Endothelial cell of umbilical vein (primary cell): ENCODE measurements at regions of chr19 and their contacts with region 1.

Region 1: DNA sequence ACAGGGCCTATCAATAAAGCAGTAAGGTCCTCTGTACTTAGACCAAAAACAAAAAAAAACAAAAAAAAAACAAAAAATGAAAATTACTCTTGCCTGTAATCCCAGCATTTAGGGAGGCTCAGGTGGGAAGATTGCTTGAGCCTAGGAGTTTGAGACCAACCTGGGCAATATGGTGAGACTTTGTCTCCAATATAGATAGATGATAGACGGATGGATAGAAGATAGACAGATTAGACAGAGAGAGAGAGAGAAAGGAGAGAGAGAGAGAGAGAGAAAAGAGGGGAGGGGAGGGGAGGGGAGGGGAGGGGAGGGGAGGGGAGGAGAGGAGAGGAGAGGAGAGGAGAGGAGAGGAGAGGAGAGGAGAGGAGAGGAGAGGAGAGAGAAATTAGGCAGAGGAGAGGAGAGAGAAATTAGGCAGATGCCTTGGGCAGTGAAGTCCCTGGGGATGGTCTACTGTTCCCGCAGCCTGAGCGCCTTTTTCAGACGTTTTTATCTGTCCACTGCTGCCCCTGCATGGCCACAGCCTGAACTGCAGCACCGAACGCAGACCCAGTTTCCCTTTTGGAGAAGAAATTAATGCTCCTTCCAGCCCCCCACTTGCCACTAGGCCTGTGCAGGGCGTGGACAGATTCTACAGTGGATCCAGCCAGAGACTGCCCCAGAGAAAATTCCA is 9.8 kb upstream of the ZNF627 start:
- DNase-seq: peak; percentile 65
- H3K4me3 ChIP-seq: no peak overlapping the region
- H3K27ac ChIP-seq: no peak overlapping the region
- H3K4me1 ChIP-seq: no peaks in the 10 kb centered on the region
- H3K27me3 ChIP-seq: no peaks in the 10 kb centered on the region
- CTCF ChIP-seq: peak; percentile 87 to 91
- POLR2A ChIP-seq: no peak

Region 2: DNA sequence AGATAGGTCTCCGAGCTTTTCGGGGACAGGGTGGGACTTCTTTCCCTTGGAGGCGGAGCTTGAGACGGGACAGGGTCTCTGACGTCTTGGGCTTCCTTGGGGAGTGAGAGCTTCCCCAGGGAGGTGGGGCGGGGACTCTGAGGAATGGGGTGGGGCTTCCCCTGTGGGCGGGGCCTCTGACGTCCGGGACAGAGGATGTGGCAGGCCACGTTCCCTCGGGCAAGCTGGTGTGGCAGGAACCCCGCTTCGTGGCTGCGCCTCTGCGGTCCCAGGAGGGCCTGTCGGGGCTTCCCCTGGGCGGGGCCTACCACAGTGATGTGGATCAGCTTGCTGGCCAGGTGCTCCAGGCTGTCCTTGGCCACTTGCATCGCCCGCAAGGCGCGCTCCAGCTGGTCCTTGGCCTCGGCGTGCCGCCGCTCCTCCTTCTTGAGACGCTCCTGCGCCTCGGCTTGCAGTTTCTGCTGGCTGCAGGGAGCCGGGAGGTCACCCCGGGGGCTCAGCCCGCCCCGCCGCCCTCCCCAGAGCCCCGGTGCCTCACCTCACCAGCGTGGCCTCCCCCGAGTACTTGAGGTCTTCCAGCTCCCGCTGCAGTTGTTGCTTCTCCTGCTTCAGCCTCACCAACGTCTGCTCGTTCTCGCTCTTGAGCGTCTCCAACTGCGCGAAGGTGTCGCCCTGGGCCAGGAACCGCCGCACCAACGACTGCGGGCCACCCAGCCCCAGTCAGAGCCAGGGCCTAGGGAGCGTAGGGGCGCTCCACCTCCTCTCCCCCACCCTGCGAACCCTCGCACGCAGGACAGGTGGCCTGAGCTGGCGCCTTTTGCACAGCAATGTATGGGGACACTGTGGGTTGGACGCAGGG is 165.0 kb before region 1 on chr19:
- CTCF ChIA-PET with region 1: no interaction called
- POLR2A ChIA-PET with region 1: no interaction called
- dilution Hi-C with region 1: no loop called
- intact Hi-C with region 1: no loop called
- DNase-seq: peak; percentile 25
- H3K4me3 ChIP-seq: no peak overlapping the region
- H3K27ac ChIP-seq: no peak overlapping the region
- H3K4me1 ChIP-seq: peaks cover 9% of the 10 kb centered on the region
- H3K27me3 ChIP-seq: peaks cover 36 to 39% of the 10 kb centered on the region in 2 experiments
- CTCF ChIP-seq: no peak
- POLR2A ChIP-seq: no peak

Region 3: GRCh38 chr19:11435058-11435832 is 152.2 kb before region 1 on chr19 and contains the starts of genes ODAD3 and PRKCSH:
- CTCF ChIA-PET with region 1: no interaction called
- POLR2A ChIA-PET with region 1: no interaction called
- dilution Hi-C with region 1: no loop called
- intact Hi-C with region 1: loop called (anchors 5 kb)
- DNase-seq: peak; percentile 100
- H3K4me3 ChIP-seq: peak within 1 kb of the TSS; percentile 71 to 88 (median 82)
- H3K27ac ChIP-seq: peak within 1 kb of the TSS; percentile 88
- H3K4me1 ChIP-seq: peaks cover 12% of the 10 kb centered on the region
- H3K27me3 ChIP-seq: no peaks in the 10 kb centered on the region
- CTCF ChIP-seq: peak; percentile 86 to 89
- POLR2A ChIP-seq: peak; percentile 83
- total RNA-seq, gene ODAD3: 0.97 TPM in 1 of 2 replicates, not detected in the other
- total RNA-seq, gene PRKCSH: 387 and 425 TPM in 2 replicates

Region 4: GRCh38 chr19:11496391-11497163 is 90.9 kb before region 1 on chr19:
- CTCF ChIA-PET with region 1: interaction called, 7 read pairs
- POLR2A ChIA-PET with region 1: no interaction called
- dilution Hi-C with region 1: no loop called
- intact Hi-C with region 1: loop called (anchors 1 kb)
- DNase-seq: peak; percentile 48
- H3K4me3 ChIP-seq: no peak overlapping the region
- H3K27ac ChIP-seq: no peak overlapping the region
- H3K4me1 ChIP-seq: no peaks in the 10 kb centered on the region
- H3K27me3 ChIP-seq: no peaks in the 10 kb centered on the region
- CTCF ChIP-seq: peak; percentile 79 to 82
- POLR2A ChIP-seq: no peak

Region 5: DNA sequence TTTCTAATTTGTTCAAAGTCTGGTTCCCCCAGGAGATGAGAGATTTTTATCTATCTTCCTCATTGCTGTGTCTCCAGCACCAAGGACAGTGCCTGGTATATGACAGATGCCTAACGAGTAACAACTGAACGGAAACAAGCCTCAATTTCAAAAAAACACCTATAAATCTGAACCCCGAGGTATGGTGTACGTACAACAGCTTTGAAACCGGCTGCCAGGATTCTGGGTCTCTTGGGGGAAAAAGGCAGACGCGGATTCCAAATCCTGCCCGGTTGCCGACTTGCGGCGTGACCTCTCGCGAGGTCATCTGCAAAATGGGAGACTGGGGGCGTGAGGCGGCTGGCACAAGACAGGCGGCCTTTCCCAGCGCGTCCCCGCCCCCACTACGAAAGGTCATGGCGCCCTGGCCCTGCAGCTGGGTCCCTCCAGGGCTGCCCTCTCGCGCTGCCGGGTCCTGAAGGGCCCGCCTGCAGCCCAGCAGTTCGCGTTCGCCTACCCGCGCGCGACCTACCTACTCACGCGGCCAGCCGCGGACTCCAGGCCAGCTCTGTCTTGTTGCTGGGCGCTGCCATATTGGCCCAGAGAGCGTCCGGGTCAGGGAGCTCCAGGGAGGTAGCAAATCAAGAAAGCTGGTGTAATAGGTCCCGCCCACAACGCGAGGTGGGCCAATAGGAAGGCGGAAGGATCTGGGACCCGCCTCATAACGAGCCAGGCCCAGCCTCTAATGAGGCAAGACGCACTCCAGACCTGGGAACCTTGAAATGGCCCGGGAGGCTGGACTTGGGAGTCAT is 58.7 kb before region 1 on chr19 and contains the start of gene ECSIT:
- CTCF ChIA-PET with region 1: no interaction called
- POLR2A ChIA-PET with region 1: no interaction called
- dilution Hi-C with region 1: no loop called
- intact Hi-C with region 1: loop called (anchors 2 kb)
- DNase-seq: peak; percentile 99
- H3K4me3 ChIP-seq: peak within 1 kb of the TSS; percentile 52 to 98 (median 90)
- H3K27ac ChIP-seq: peak within 1 kb of the TSS; percentile 82
- H3K4me1 ChIP-seq: peaks cover 8% of the 10 kb centered on the region
- H3K27me3 ChIP-seq: no peaks in the 10 kb centered on the region
- CTCF ChIP-seq: no peak
- POLR2A ChIP-seq: no peak
- total RNA-seq, gene ECSIT: 32.4 and 36.7 TPM in 2 replicates

Region 6: DNA sequence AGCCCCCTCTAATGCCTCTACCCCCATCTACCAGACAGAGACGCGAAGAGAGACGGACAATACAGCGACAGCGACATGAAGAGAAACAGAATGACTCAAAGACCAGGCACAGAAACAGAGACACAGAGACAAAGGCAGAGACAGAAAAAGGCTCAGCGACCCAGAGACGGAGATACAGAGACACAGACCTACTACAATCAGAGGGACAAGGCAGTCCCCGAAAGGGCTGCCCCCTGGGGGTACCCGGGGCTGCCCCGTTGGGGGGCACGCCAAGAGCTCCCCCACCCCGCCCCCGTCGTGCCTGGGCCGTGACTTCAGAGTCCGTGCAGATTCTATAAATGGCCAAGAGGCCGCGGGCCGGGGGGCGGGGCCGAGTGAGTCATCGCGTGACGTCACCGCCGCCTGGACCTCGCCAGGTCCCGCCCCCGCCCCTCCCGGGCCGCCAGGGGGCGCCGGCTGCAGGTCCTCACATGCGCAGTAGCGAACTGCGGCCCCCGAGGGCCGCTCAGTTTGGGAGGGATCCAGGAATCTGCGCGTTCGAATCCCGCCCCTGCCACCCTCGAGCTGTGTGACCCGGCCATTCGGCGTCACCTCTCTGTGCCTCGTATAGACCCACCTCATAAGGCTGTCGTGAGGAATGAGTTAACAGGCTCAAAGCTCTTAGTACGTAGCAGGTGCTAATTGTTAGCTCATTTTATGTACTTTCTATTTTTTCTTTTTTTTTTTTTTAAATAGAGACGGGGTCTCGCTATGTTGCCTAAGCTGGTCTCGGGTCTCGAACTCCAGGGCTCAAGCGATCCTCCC is 51.4 kb before region 1 on chr19:
- CTCF ChIA-PET with region 1: interaction called, 11 read pairs
- POLR2A ChIA-PET with region 1: no interaction called
- dilution Hi-C with region 1: no loop called
- intact Hi-C with region 1: loop called (anchors 1 kb)
- DNase-seq: peak; percentile 81
- H3K4me3 ChIP-seq: peak overlapping the region; percentile 26 to 54 (median 33)
- H3K27ac ChIP-seq: peak overlapping the region; percentile 76
- H3K4me1 ChIP-seq: peaks cover 9% of the 10 kb centered on the region
- H3K27me3 ChIP-seq: peaks cover 5 to 9% of the 10 kb centered on the region in 2 experiments
- CTCF ChIP-seq: peak; percentile 94 to 98
- POLR2A ChIP-seq: peak; percentile 40

Region 7: GRCh38 chr19:11558881-11559828 is 28.3 kb before region 1 on chr19 and contains the start of gene ELOF1:
- CTCF ChIA-PET with region 1: interaction called, 8 read pairs
- POLR2A ChIA-PET with region 1: no interaction called
- dilution Hi-C with region 1: no loop called
- intact Hi-C with region 1: loop called (anchors 1 kb)
- DNase-seq: peak; percentile 97
- H3K4me3 ChIP-seq: peak within 1 kb of the TSS; percentile 56 to 81 (median 58)
- H3K27ac ChIP-seq: peak within 1 kb of the TSS; percentile 14
- H3K4me1 ChIP-seq: peaks cover 9% of the 10 kb centered on the region
- H3K27me3 ChIP-seq: no peaks in the 10 kb centered on the region
- CTCF ChIP-seq: no peak
- POLR2A ChIP-seq: peak; percentile 88
- total RNA-seq, gene ELOF1: 39.4 and 49.9 TPM in 2 replicates

Region 8: DNA sequence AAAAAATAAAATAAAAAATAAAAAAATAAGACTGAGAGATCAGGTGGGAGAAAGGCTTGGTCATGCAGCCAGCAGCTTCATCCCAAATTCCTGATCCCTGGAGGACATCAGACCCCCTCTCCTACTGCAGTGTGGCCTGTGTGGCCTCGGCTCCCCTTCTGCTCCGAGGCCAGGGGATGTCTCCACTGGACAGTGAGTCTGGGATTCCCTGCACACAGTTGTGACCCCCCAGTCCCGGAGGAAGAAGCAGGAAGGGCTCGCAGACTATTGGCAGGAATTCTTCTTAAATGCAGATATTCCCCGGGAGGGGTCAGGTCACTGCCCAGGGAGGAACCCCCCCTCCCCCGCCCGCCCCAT is 51.8 kb after region 1 on chr19:
- CTCF ChIA-PET with region 1: no interaction called
- POLR2A ChIA-PET with region 1: no interaction called
- dilution Hi-C with region 1: no loop called
- intact Hi-C with region 1: no loop called
- DNase-seq: no peak
- H3K4me3 ChIP-seq: no peak overlapping the region
- H3K27ac ChIP-seq: no peak overlapping the region
- H3K4me1 ChIP-seq: no peaks in the 10 kb centered on the region
- H3K27me3 ChIP-seq: no peaks in the 10 kb centered on the region
- CTCF ChIP-seq: no peak
- POLR2A ChIP-seq: no peak